ENCODE measurements at regions of chr9 and their contacts with region 1.

Region 1: GRCh38 chr9:76810377-76810957 is 46.2 kb downstream of the PCA3 start:
- DNase-seq: peak in 1 of 9 donors; percentile 4
- ATAC-seq: no peak
- H3K4me3 ChIP-seq: no peak overlapping the region
- H3K4me3 Mint-ChIP-seq: no peak overlapping the region
- H3K27ac ChIP-seq: no peak overlapping the region
- H3K27ac Mint-ChIP-seq: no peak overlapping the region
- H3K4me1 ChIP-seq: no peaks in the 10 kb centered on the region
- H3K4me1 Mint-ChIP-seq: no peaks in the 10 kb centered on the region
- H3K27me3 ChIP-seq: no peaks in the 10 kb centered on the region
- H3K27me3 Mint-ChIP-seq: peaks cover 5 to 50% (median 22%) of the 10 kb centered on the region in 5 donors

Region 2: GRCh38 chr9:76855015-76855414 is 44.5 kb after region 1 on chr9:
- CTCF ChIA-PET with region 1: no interaction called
- POLR2A ChIA-PET with region 1: no interaction called
- intact Hi-C with region 1: no loop called
- DNase-seq: no peak
- ATAC-seq: no peak
- H3K4me3 ChIP-seq: no peak overlapping the region
- H3K4me3 Mint-ChIP-seq: no peak overlapping the region
- H3K27ac ChIP-seq: no peak overlapping the region
- H3K27ac Mint-ChIP-seq: no peak overlapping the region
- H3K4me1 ChIP-seq: no peaks in the 10 kb centered on the region
- H3K4me1 Mint-ChIP-seq: no peaks in the 10 kb centered on the region
- H3K27me3 ChIP-seq: no peaks in the 10 kb centered on the region
- H3K27me3 Mint-ChIP-seq: peaks cover 0 to 20% (median 11%) of the 10 kb centered on the region in 5 donors

Region 3: DNA sequence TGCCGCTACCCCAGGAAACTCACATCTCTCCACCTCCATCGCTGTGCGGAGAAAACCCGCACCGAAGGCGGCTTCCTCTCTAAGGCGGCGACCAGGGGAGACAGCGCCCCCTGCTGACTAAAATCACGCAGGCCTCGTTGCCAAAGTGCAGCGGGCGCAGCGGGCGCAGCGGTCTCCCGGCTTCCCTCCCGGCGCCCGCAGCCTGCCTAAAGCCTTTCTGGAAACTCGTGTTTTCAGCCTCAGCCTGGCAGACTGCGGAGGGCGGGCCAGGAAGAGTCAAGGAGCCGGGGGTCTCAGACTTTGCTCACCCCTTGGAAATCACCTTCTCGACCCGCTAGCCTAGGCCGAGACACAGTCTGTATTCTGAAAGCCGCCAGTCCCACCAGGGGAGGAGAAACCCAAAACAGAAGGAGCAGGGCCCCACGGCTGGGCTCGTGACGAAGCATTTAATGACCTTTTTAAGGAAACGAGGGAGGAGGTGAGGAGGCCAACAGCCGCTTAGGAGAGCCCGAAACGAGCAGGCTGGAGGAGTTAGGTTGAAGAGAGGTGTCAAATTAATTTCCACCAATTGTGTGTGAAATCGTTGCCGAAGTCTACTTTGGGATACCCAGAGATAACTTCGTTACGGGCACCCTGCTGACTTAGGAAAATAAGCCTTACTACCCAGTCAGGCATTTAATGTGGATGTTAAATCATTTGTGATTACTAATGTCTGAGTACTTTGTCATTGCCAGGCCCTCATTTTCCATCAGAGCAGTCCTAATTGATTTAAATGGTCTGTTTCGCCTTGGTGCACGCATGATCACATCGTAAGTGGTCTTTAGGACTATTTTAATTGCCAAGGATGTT is 201.7 kb after region 1 on chr9:
- CTCF ChIA-PET with region 1: no interaction called
- POLR2A ChIA-PET with region 1: no interaction called
- intact Hi-C with region 1: loop called in 1 of 2 experiments (anchors 1 kb)
- DNase-seq: peak; percentile 13 to 66 (median 38)
- ATAC-seq: peak; percentile 77
- H3K4me3 ChIP-seq: no peak overlapping the region
- H3K4me3 Mint-ChIP-seq: peak overlapping the region in 9 of 10 donors; percentile 12 to 61 (median 28)
- H3K27ac ChIP-seq: no peak overlapping the region
- H3K27ac Mint-ChIP-seq: peak overlapping the region in 1 of 9 donors; percentile 24
- H3K4me1 ChIP-seq: no peaks in the 10 kb centered on the region
- H3K4me1 Mint-ChIP-seq: peaks cover 4 to 24% (median 8%) of the 10 kb centered on the region in 7 donors
- H3K27me3 ChIP-seq: peaks cover 0 to 7% of the 10 kb centered on the region in 2 donors
- H3K27me3 Mint-ChIP-seq: peaks cover 63 to 78% (median 70%) of the 10 kb centered on the region in 5 donors

Region 4: GRCh38 chr9:77149879-77150278 is 339.4 kb after region 1 on chr9:
- CTCF ChIA-PET with region 1: no interaction called
- POLR2A ChIA-PET with region 1: no interaction called
- intact Hi-C with region 1: loop called in 1 of 2 experiments (anchors 1 kb)
- DNase-seq: no peak
- ATAC-seq: no peak
- H3K4me3 ChIP-seq: no peak overlapping the region
- H3K4me3 Mint-ChIP-seq: no peak overlapping the region
- H3K27ac ChIP-seq: no peak overlapping the region
- H3K27ac Mint-ChIP-seq: no peak overlapping the region
- H3K4me1 ChIP-seq: no peaks in the 10 kb centered on the region
- H3K4me1 Mint-ChIP-seq: no peaks in the 10 kb centered on the region
- H3K27me3 ChIP-seq: no peaks in the 10 kb centered on the region
- H3K27me3 Mint-ChIP-seq: peaks cover 10 to 24% (median 18%) of the 10 kb centered on the region in 5 donors

Region 5: DNA sequence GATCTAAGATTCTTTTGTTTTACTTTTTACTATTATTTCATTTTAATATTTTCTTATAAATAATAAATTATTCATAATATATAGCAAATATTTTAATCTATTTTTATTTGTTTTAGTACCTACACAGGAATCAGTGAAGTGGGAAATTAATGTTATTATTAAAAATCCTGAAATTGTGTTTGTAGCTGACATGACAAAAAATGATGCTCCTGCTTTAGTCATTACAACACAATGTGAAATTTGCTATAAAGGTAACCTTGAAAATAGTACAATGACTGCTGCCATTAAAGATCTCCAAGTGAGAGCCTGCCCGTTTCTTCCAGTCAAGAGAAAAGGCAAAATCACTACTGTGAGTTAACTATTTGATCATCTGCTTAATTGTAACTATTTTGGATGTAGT is 505.6 kb after region 1 on chr9:
- CTCF ChIA-PET with region 1: no interaction called
- POLR2A ChIA-PET with region 1: no interaction called
- intact Hi-C with region 1: no loop called
- DNase-seq: no peak
- ATAC-seq: no peak
- H3K4me3 ChIP-seq: no peak overlapping the region
- H3K4me3 Mint-ChIP-seq: no peak overlapping the region
- H3K27ac ChIP-seq: no peak overlapping the region
- H3K27ac Mint-ChIP-seq: no peak overlapping the region
- H3K4me1 ChIP-seq: no peaks in the 10 kb centered on the region
- H3K4me1 Mint-ChIP-seq: no peaks in the 10 kb centered on the region
- H3K27me3 ChIP-seq: no peaks in the 10 kb centered on the region
- H3K27me3 Mint-ChIP-seq: no peaks in the 10 kb centered on the region

Measured in naive thymus-derived CD4-positive, alpha-beta T cell (primary cell).